ENCODE measurements at regions of chr3 and their contacts with region 1.

Region 1: GRCh38 chr3:180036671-180037455 is at the start of gene PEX5L:
- DNase-seq: peak; percentile 16
- H3K4me3 Mint-ChIP-seq: peak within 1 kb of the TSS; percentile 64
- H3K27ac Mint-ChIP-seq: no peak within 1 kb of the TSS
- H3K4me1 Mint-ChIP-seq: peaks cover 5% of the 10 kb centered on the region
- H3K27me3 Mint-ChIP-seq: peaks cover 44% of the 10 kb centered on the region
- total RNA-seq, gene PEX5L: 0.17 and 0.67 TPM in 2 replicates

Region 2: DNA sequence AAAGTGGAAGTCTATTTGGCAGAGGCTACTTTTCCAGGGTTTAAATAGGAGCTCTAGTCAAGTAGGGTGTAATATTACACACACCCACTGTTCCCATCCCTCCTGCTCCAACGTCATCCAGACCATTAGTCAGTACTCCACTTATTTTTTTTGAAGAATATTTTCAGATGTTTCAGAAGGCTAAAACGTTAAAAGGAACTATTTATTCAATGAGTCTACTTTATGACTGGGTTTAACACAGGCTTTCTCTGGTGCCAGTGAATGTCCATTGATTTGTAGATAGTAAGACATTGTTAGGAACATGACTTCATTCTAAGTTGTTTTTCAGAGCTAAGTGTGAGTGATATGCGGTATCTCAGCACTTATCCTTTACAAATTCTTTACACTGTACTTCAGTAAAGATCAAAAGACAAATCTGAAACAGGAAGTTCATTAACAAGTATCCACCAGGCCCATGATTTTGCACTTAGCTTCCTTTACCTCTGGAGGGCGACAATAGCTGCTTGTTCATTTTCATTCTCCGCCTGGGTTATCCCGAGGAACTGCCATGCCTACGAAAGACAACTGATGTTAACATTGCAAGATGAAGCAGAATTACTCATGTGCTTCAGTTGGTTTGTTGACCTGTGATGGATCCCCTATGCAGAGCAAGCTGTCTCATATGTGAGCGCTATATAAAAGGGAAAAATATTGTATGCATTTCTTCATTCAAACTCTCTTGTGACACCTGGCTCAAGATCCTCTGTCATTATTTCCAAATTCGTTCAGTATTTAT is 225.4 kb before region 1 on chr3:
- intact Hi-C with region 1: loop called (anchors 10 kb)
- DNase-seq: no peak
- H3K4me3 Mint-ChIP-seq: no peak overlapping the region
- H3K27ac Mint-ChIP-seq: no peak overlapping the region
- H3K4me1 Mint-ChIP-seq: no peaks in the 10 kb centered on the region
- H3K27me3 Mint-ChIP-seq: peaks cover 2% of the 10 kb centered on the region

Region 3: DNA sequence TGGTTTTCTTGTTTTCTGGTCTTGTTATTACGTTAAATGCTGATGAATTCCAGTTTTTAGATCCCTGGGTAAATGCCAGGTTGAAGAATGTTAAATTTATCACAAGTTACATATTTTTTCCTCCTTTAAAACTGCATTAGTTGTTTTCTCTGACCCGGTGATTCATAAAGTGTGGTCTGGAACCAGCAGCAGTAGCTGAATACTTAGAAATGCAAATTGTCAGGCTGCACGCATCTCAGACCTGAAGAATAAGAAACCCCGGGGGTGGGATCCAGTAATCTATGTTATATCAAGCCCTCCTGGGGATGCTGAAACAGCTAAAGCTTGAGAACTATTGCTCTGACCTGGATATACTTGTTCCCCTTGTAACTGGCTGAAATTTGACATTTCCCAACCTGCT is 69.2 kb before region 1 on chr3:
- intact Hi-C with region 1: loop called (anchors 5 kb)
- DNase-seq: no peak
- H3K4me3 Mint-ChIP-seq: no peak overlapping the region
- H3K27ac Mint-ChIP-seq: no peak overlapping the region
- H3K4me1 Mint-ChIP-seq: peaks cover 7% of the 10 kb centered on the region
- H3K27me3 Mint-ChIP-seq: peaks cover 8% of the 10 kb centered on the region

Region 4: DNA sequence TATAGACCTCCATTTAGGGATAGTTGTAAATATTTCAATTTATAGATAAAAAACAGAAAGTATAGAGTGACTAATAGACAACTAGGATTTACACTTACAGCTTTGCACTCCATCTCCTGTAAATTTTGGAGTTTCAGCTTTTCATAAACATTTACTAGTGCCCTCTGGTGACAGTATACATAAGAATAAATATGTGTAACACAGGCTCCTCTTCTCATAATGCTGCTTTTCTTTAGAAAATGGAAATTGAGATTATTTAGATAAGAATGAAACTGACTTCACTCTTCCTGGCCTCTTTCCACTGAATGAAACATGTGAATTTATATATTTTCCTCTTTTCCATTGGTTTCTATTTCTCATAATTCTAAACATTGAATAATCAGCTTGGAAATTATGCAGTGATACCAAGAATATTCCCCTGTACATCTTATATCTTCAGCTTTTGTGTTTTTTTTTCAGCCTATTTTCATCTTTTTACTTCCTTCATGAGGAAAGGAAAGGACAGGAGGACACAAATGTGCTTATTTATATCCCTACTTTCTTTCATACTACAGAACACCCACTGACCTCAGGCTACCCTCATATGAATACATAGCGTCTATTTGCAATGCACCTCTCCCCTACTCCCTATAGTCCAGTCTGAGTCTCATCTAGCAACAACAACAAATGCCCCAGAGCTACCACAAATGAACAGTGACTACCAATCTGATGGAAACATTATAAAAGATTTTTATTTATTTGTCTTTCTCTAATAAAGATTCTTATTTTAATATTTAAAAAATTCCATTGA is 745.5 kb after region 1 on chr3:
- intact Hi-C with region 1: no loop called
- DNase-seq: no peak
- H3K4me3 Mint-ChIP-seq: no peak overlapping the region
- H3K27ac Mint-ChIP-seq: no peak overlapping the region
- H3K4me1 Mint-ChIP-seq: no peaks in the 10 kb centered on the region
- H3K27me3 Mint-ChIP-seq: no peaks in the 10 kb centered on the region

Measured in activated T-helper 1 cell treated with anti-CD3 and anti-CD28 coated beads, Interleukin-12 subunit alpha, Interleukin-12 subunit beta, Interleukin-2, Interleukin-4 antibody, amounts not matched to agents 30 ng/mL and 10 ng/mL and 1 ng/mL, durations not matched to agents 14 hours and 24 hours and 36 hours (primary cell).